ENCODE measurements at regions of chr22 and their contacts with region 1.

Region 1: GRCh38 chr22:27866132-27867086 is 52.6 kb downstream of the PITPNB start:
- DNase-seq: no peak
- ATAC-seq: peak; percentile 81
- H3K4me3 ChIP-seq: no peak overlapping the region
- H3K27ac ChIP-seq: peak overlapping the region in 1 of 2 donors; percentile 68
- H3K4me1 ChIP-seq: peaks cover 6 to 9% of the 10 kb centered on the region in 2 donors
- H3K27me3 ChIP-seq: no peaks in the 10 kb centered on the region

Region 2: DNA sequence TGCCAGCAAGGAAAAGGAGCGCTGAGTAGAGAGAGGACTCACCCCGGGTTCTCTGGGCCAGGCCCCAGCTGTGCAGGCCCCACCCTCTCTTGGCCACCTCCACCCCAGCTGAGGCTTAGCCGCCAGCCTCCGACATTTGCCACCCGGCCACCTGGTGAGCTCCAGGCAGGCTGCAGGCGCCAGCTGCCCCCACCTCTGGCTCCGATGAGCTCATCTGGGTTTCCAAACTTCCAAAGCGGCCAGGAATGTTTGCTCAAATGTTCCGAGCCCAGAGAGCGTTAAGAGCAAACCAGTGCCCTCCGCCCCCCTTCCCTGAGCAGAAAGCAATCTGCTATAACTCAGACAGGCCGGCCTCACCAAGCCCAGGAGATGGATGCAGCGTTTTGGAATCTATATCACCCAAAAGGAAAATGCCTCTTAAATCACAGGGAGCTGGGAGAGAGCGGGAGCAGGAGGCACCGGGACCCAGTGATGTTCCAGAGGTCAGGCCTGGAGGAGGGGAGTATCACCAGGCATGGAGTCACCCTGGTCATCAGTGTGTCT is 55.7 kb before region 1 on chr22:
- intact Hi-C with region 1: loop called in 1 of 2 experiments (anchors 5 kb)
- DNase-seq: peak; percentile 91 to 93
- ATAC-seq: peak; percentile 88
- H3K4me3 ChIP-seq: no peak overlapping the region
- H3K27ac ChIP-seq: peak overlapping the region; percentile 28 to 78
- H3K4me1 ChIP-seq: no peaks in the 10 kb centered on the region
- H3K27me3 ChIP-seq: no peaks in the 10 kb centered on the region

Region 3: DNA sequence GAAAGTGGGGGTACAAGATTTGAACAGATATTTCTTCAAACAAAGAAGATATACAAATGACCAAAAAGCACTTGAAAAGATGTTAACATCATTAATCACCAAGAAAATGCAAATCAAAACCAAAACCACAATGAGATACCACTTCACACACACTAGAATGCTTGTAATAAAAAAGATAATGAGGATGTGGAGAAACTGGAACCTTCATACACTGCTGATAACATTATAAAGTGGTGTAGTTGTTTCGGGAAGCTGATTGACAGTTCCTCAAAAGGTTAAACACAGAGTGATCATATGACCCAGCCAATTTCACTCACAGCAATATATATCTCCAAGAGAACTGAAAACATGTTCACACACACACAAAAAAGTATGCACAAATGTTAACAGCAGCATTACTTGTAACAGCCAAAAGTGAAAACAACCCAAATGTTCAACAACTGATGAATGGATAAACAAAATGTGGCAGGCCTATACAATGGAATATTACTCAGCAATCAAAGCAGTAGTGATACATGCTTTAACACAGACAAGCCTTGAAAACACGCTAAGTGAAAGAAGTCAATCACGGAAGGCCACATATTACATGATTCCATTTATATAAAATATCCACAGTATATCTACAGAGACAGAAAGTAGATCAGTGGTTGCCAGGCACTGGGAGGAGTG is 37.5 kb after region 1 on chr22:
- intact Hi-C with region 1: no loop called
- DNase-seq: no peak
- ATAC-seq: no peak
- H3K4me3 ChIP-seq: no peak overlapping the region
- H3K27ac ChIP-seq: no peak overlapping the region
- H3K4me1 ChIP-seq: peaks cover 2 to 6% of the 10 kb centered on the region in 2 donors
- H3K27me3 ChIP-seq: no peaks in the 10 kb centered on the region

Measured in aorta (tissue), 5 donors.